ENCODE measurements at regions of chr1 and their contacts with region 1.

Region 1: GRCh38 chr1:205631727-205632373 is at the start of gene ELK4:
- DNase-seq: peak; percentile 99 to 100 (median 100)
- ATAC-seq: peak; percentile 78
- H3K4me3 ChIP-seq: peak within 1 kb of the TSS; percentile 64 to 71
- H3K4me3 Mint-ChIP-seq: peak within 1 kb of the TSS; percentile 89
- H3K27ac ChIP-seq: peak within 1 kb of the TSS; percentile 75 to 95
- H3K27ac Mint-ChIP-seq: peak within 1 kb of the TSS; percentile 99
- H3K4me1 ChIP-seq: peaks cover 37% of the 10 kb centered on the region
- H3K4me1 Mint-ChIP-seq: peaks cover 44% of the 10 kb centered on the region
- H3K27me3 ChIP-seq: no peaks in the 10 kb centered on the region
- H3K27me3 Mint-ChIP-seq: no peaks in the 10 kb centered on the region
- CTCF ChIP-seq: peak; percentile 78
- total RNA-seq, gene ELK4: 142 to 147 TPM

Region 2: DNA sequence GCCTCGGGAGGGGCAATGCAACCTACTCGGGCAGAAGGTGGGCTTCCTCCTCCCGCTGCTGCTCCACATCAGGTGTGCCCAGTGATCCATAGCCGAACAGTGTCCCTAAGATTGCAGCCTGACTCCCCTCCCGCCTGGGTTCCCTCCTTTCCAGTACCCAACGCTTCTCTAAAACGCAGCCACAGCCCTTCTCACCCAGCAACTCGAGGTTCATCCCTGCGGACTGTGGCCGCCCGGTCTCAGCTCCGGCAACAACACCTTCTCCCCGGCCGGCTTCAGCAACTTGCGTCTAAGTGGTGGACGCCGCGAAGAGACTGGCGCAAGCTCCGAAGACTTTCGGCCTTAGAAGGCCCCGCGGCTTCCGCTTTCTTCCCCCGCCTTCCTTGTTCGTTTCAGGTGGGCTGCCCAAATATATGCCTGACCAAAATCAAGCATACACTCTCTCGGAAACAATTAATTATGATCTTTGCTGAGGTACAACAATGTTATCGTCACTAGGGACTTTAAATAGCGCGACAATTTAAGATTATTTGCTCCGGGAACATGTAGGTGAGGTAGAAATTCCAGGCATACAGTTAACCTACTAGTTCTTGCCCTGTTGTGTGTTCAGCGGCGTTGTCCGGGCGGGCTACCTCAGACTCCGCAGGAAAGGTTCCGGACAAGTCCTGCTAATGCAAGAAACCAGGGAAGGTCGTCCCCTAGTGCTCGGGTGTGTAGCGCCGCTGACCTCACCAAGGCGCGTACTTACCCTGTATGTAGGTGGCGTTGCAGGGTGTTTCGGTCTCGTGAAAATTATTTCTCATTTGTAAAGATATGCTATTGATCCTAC is 510.0 kb before region 1 on chr1 and contains the start of gene RBBP5:
- CTCF ChIA-PET with region 1: no interaction called
- POLR2A ChIA-PET with region 1: interaction called, 3 read pairs
- intact Hi-C with region 1: loop called (anchors 1 kb)
- DNase-seq: peak; percentile 92 to 98 (median 95)
- ATAC-seq: peak; percentile 93
- H3K4me3 ChIP-seq: peak within 1 kb of the TSS; percentile 91 to 95
- H3K4me3 Mint-ChIP-seq: peak within 1 kb of the TSS; percentile 96
- H3K27ac ChIP-seq: peak within 1 kb of the TSS; percentile 88 to 97
- H3K27ac Mint-ChIP-seq: peak within 1 kb of the TSS; percentile 100
- H3K4me1 ChIP-seq: peaks cover 26% of the 10 kb centered on the region
- H3K4me1 Mint-ChIP-seq: peaks cover 46% of the 10 kb centered on the region
- H3K27me3 ChIP-seq: no peaks in the 10 kb centered on the region
- H3K27me3 Mint-ChIP-seq: no peaks in the 10 kb centered on the region
- CTCF ChIP-seq: peak; percentile 59
- total RNA-seq, gene RBBP5: 23.9 to 25.7 TPM

Region 3: GRCh38 chr1:205211169-205211838 is 420.5 kb before region 1 on chr1 and contains the start of gene DSTYK:
- CTCF ChIA-PET with region 1: no interaction called
- POLR2A ChIA-PET with region 1: interaction called, 4 read pairs
- intact Hi-C with region 1: loop called (anchors 1 to 5 kb)
- DNase-seq: peak; percentile 83 to 96 (median 91)
- ATAC-seq: peak; percentile 92
- H3K4me3 ChIP-seq: peak within 1 kb of the TSS; percentile 55 to 93
- H3K4me3 Mint-ChIP-seq: peak within 1 kb of the TSS; percentile 96
- H3K27ac ChIP-seq: peak within 1 kb of the TSS; percentile 58 to 80
- H3K27ac Mint-ChIP-seq: peak within 1 kb of the TSS; percentile 98
- H3K4me1 ChIP-seq: peaks cover 15% of the 10 kb centered on the region
- H3K4me1 Mint-ChIP-seq: peaks cover 50% of the 10 kb centered on the region
- H3K27me3 ChIP-seq: no peaks in the 10 kb centered on the region
- H3K27me3 Mint-ChIP-seq: no peaks in the 10 kb centered on the region
- CTCF ChIP-seq: no peak
- total RNA-seq, gene DSTYK: 15.4 to 17.2 TPM

Region 4: DNA sequence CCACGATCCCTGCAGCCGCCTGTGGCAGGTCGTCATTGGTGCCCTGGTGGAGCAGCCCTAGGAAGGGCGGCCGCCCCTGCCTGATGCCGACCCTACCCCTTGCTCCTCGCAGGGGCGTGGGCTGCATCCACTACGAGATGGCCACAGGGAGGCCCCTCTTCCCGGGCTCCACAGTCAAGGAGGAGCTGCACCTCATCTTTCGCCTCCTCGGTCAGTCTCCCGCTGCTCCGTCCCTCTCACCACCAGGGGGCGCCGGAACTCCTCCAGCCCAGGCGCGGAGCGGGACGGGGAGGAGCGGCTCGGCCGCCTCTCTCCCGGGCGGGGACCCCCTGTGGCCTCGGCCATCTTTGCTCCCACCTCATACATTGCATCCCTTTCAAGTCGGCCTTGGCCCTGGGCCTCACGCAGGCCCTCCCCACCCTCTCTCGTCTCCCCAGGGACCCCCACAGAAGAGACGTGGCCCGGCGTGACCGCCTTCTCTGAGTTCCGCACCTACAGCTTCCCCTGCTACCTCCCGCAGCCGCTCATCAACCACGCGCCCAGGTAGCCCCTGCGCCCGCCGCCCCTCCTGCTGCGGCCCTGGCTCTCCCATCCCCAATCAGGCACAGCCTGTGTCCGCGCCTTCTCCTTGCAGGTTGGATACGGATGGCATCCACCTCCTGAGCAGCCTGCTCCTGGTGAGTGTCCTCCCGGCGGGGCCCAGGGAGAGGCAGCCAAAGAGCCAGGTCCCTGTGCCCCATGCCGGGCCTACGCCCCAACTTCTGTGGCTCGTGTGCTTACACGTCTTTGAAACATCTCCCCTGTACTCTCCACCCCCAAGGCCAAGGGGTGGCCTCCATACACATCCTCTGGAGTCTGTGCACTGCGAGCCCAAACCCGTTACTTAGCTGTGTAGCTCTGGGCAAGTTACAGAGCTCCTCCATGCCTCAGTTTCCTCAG is 102.7 kb before region 1 on chr1:
- CTCF ChIA-PET with region 1: interaction called, 5 read pairs
- POLR2A ChIA-PET with region 1: interaction called, 8 read pairs
- intact Hi-C with region 1: loop called (anchors 1 kb)
- DNase-seq: peak; percentile 68 to 92 (median 80)
- ATAC-seq: peak; percentile 90
- H3K4me3 ChIP-seq: peak overlapping the region in 1 of 2 experiments; percentile 26
- H3K4me3 Mint-ChIP-seq: peak overlapping the region; percentile 58
- H3K27ac ChIP-seq: no peak overlapping the region
- H3K27ac Mint-ChIP-seq: no peak overlapping the region
- H3K4me1 ChIP-seq: no peaks in the 10 kb centered on the region
- H3K4me1 Mint-ChIP-seq: peaks cover 5% of the 10 kb centered on the region
- H3K27me3 ChIP-seq: no peaks in the 10 kb centered on the region
- H3K27me3 Mint-ChIP-seq: no peaks in the 10 kb centered on the region
- CTCF ChIP-seq: peak; percentile 90

Region 5: DNA sequence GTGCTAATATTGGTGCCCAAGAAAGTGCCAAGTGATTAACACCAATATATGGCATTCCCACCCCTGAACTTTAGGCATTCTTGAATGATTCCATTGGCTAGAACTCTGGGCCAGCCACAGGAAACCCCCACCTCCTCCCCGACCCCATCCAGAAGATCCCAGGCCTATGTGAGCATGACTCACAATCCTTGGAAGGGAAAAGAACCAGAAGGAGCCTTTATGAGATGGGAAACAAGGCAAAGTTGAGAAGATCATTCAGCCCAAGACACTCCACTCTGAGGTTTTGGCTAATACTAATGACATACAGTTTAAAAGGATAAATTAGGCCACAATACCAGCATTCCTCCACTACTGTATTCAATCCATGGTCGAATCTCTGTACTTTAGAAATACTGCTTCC is 21.8 kb before region 1 on chr1:
- CTCF ChIA-PET with region 1: no interaction called
- POLR2A ChIA-PET with region 1: interaction called, 8 read pairs
- intact Hi-C with region 1: loop called in 1 of 2 experiments (anchors 2 kb)
- DNase-seq: no peak
- ATAC-seq: no peak
- H3K4me3 ChIP-seq: no peak overlapping the region
- H3K4me3 Mint-ChIP-seq: no peak overlapping the region
- H3K27ac ChIP-seq: no peak overlapping the region
- H3K27ac Mint-ChIP-seq: peak overlapping the region; percentile 23
- H3K4me1 ChIP-seq: peaks cover 28% of the 10 kb centered on the region
- H3K4me1 Mint-ChIP-seq: peaks cover 48% of the 10 kb centered on the region
- H3K27me3 ChIP-seq: no peaks in the 10 kb centered on the region
- H3K27me3 Mint-ChIP-seq: no peaks in the 10 kb centered on the region
- CTCF ChIP-seq: no peak

Region 6: GRCh38 chr1:205680073-205680851 is 48.4 kb after region 1 on chr1 and contains the start of gene SLC45A3:
- CTCF ChIA-PET with region 1: no interaction called
- POLR2A ChIA-PET with region 1: no interaction called
- intact Hi-C with region 1: no loop called
- DNase-seq: peak in 8 of 9 experiments; percentile 16 to 61 (median 42)
- ATAC-seq: peak; percentile 74
- H3K4me3 ChIP-seq: peak within 1 kb of the TSS; percentile 8 to 57
- H3K4me3 Mint-ChIP-seq: peak within 1 kb of the TSS; percentile 82
- H3K27ac ChIP-seq: no peak within 1 kb of the TSS
- H3K27ac Mint-ChIP-seq: no peak within 1 kb of the TSS
- H3K4me1 ChIP-seq: peaks cover 13% of the 10 kb centered on the region
- H3K4me1 Mint-ChIP-seq: peaks cover 13% of the 10 kb centered on the region
- H3K27me3 ChIP-seq: peaks cover 0 to 3% of the 10 kb centered on the region in 2 experiments
- H3K27me3 Mint-ChIP-seq: peaks cover 13% of the 10 kb centered on the region
- CTCF ChIP-seq: no peak
- total RNA-seq, gene SLC45A3: 0.16 TPM in 1 of 2 experiments, not detected in the other

Region 7: DNA sequence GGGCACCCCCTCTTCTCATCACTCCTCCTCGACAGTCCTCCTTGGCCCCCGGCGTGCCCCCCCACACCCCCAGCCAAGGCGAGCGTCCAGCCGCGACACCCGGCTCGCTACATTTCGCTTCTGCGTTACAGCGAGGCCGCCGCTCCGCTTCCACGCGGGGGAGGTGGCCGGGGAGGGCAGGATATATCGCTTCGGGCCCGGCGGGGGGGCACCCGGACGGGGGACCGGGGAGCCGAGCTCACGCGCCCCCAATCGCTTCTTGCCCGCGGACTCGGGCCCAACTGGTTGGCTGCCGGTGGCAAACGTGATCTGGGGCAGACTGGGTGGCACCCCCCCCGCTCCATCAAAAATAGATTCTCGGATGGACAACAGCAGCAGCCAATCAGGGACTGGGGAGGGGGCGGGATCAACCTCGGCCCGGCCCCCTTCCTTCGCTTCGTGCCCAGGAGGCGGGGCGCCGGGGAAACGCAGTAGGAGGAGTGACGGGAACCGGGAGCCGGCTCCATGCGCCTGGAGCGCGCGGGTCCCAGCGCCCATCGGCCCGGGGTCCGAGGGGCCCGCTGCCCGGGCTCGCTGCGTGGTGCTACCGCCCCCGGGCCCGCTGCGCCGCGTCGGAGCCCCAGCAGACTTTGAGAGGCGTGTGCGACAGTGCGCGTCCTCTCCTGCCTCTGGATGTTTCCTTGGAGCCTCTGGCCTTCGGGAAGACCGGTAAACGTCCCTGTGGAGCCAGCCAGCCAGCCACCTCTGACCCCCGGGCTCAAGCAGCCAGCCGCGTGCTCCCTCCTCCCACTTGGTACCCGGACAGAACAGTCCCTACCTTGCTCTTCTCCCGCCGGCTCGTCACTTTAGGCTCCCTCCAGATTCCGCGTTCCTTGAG is 181.3 kb after region 1 on chr1 and contains the start of gene SLC41A1:
- CTCF ChIA-PET with region 1: no interaction called
- POLR2A ChIA-PET with region 1: interaction called, 4 read pairs
- intact Hi-C with region 1: loop called in 1 of 2 experiments (anchors 1 kb)
- DNase-seq: peak; percentile 82 to 97 (median 92)
- ATAC-seq: peak; percentile 94
- H3K4me3 ChIP-seq: peak within 1 kb of the TSS; percentile 78 to 82
- H3K4me3 Mint-ChIP-seq: peak within 1 kb of the TSS; percentile 91
- H3K27ac ChIP-seq: peak within 1 kb of the TSS; percentile 43 to 64
- H3K27ac Mint-ChIP-seq: peak within 1 kb of the TSS; percentile 84
- H3K4me1 ChIP-seq: peaks cover 51% of the 10 kb centered on the region
- H3K4me1 Mint-ChIP-seq: peaks cover 58% of the 10 kb centered on the region
- H3K27me3 ChIP-seq: no peaks in the 10 kb centered on the region
- H3K27me3 Mint-ChIP-seq: no peaks in the 10 kb centered on the region
- CTCF ChIP-seq: no peak
- total RNA-seq, gene SLC41A1: 36.8 to 41.7 TPM

Measured in CD8-positive, alpha-beta T cell (primary cell).